Activated T-helper 2 cell treated with anti-CD3 and anti-CD28 coated beads, Interferon-gamma antibody, Interleukin-2, Interleukin-4, amounts not matched to agents 10 μg/mL and 5 μg/mL and 100 μg/mL, durations not matched to agents 14 hours and 24 hours and 36 hours (primary cell): ENCODE measurements at regions of chr10 and their contacts with region 1.

Region 1: DNA sequence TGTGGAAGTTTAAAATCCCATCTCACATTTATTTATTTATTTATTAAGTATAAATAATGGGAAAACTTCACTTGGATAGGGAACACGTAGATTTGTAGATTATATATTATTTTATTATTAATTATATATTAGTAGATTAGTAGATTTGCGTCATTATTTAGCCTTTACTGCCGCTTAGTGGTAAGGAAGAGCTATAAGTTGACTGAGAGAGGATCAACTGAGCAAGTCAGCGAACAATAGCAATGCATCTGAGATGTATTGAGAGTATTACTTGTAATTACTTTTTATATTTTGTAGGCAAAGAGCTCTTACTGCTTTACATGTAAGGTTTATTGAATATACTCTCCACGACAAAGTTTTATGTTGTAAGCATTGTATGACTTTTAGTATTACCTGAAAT is 244.5 kb upstream of the ANKRD30A start:
- DNase-seq: no peak
- H3K4me3 Mint-ChIP-seq: no peak overlapping the region
- H3K27ac Mint-ChIP-seq: no peak overlapping the region
- H3K4me1 Mint-ChIP-seq: no peaks in the 10 kb centered on the region
- H3K27me3 Mint-ChIP-seq: no peaks in the 10 kb centered on the region

Region 2: DNA sequence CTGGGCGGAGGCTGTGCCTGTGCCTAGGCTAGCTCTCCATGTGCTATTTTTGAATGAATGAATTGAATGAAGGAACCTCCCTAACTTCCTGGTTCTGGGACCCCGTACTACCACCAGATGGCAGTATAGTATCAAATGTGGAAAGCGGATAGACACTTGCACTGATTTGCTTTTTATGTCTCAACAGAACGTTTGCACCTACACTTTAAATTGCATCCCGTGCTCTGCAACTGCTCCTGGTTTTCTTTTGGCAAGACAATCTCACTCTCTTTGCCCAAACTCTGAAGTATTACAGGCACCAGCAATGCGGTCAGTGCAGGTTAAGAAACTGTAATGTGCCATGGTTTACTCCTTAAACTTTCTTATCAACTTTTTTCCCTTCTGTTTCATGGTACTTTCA is 1245.3 kb before region 1 on chr10:
- intact Hi-C with region 1: loop called (anchors 5 kb)
- DNase-seq: no peak
- H3K4me3 Mint-ChIP-seq: no peak overlapping the region
- H3K27ac Mint-ChIP-seq: no peak overlapping the region
- H3K4me1 Mint-ChIP-seq: peaks cover 5% of the 10 kb centered on the region
- H3K27me3 Mint-ChIP-seq: peaks cover 33% of the 10 kb centered on the region